Right cardiac atrium (tissue), 5 donors: ENCODE measurements at regions of chr11 and their contacts with region 1.

Region 1: GRCh38 chr11:9428706-9429105 is 32.1 kb upstream of the ZNF143 start:
- DNase-seq: no peak
- ATAC-seq: no peak
- H3K4me3 ChIP-seq: no peak overlapping the region
- H3K27ac ChIP-seq: no peak overlapping the region
- H3K4me1 ChIP-seq: no peaks in the 10 kb centered on the region
- H3K27me3 ChIP-seq: no peaks in the 10 kb centered on the region

Region 2: GRCh38 chr11:8973121-8973520 is 455.6 kb before region 1 on chr11:
- intact Hi-C with region 1: no loop called
- DNase-seq: no peak
- ATAC-seq: no peak
- H3K4me3 ChIP-seq: no peak overlapping the region
- H3K27ac ChIP-seq: no peak overlapping the region
- H3K4me1 ChIP-seq: no peaks in the 10 kb centered on the region
- H3K27me3 ChIP-seq: no peaks in the 10 kb centered on the region

Region 3: GRCh38 chr11:9493492-9493891 is 64.8 kb after region 1 on chr11:
- intact Hi-C with region 1: loop called in 1 of 4 experiments (anchors 10 kb)
- DNase-seq: no peak
- ATAC-seq: no peak
- H3K4me3 ChIP-seq: no peak overlapping the region
- H3K27ac ChIP-seq: no peak overlapping the region
- H3K4me1 ChIP-seq: no peaks in the 10 kb centered on the region
- H3K27me3 ChIP-seq: no peaks in the 10 kb centered on the region